Activated CD4-positive, alpha-beta memory T cell treated with anti-CD3 and anti-CD28 coated beads, Interleukin-2, amount 10 ng/mL, durations not matched to agents 7 days and 5 days (primary cell): ENCODE measurements at regions of chrX and their contacts with region 1.

Region 1: DNA sequence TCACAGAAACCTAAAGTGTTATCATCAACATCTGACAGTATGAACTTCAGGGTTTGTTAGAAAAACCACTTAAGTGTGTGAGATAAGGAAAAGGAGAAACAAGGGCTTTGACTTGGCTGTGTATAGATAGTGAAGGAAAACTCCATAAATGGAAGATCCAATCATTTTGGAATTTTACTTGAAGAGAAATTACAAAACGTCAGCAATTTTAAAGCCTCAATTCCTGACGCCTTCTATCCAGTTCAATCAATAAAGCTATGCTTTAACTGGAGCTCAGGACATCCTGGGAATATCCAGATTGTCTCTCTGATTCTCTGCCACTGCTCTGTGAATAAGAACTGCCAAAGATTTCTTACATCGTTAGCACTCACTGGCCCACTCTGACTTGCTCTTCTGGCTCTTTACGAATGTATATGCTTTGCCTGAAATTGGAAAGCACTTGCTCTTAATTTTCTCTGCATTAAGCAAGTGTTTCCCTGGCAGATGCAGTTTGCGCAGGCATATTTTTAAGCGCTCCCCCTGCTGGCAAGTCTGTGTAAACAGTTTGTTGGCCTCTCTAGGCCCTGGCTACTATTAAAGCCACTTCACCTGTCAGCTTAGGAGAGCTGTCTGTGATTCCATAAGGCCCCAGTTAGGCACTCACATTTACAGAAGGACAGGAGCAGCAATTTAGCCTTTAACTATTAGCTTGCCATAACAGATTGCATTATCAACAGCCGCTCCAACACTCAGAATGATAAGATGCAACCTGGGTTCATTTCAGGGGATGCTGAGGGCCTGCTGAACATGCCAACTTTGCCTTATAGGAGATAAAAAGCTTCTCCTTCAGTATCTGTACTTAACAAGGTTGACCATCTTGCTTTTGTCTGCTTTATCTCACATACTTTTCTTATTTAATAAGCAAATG is 251.4 kb upstream of the DDX53 start:
- DNase-seq: peak; percentile 20
- H3K4me3 Mint-ChIP-seq: no peak overlapping the region
- H3K27ac Mint-ChIP-seq: no peak overlapping the region
- H3K4me1 Mint-ChIP-seq: no peaks in the 10 kb centered on the region
- H3K27me3 Mint-ChIP-seq: no peaks in the 10 kb centered on the region

Region 2: DNA sequence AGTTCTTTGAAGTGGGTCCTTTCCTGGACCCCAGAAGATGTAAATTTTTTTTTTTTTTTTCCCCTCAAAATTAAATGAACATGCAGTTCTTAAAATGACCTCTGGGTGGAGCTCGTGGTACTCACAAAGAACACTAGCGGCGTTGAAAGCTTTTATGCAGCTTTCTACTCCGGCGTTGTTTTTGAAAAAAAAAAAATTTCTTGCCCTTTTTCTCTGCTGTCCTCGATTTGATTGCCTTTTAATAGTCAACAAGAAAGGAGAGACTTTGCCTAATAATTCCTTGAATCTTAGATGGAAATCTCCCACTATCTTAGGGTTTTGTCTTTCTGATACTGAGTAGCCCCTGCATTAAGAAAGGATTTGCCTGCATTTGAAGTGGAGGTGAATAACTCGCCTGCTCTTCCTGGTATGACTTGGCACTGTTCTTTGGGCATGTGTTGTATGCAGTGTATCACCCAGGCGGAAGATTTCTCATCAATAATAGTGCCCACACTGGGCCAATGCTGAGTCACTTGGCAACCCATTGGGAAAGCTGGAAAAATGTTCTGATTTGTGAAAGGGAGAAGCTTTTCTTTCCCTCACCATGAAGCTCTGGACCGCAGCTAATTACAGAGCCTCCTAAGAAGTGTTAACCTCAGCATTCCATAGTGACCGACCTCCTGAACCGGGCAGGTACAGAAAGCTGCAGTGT is 612.2 kb before region 1 on chrX:
- CTCF ChIA-PET with region 1: interaction called, 15 read pairs
- POLR2A ChIA-PET with region 1: no interaction called
- DNase-seq: no peak
- H3K4me3 Mint-ChIP-seq: no peak overlapping the region
- H3K27ac Mint-ChIP-seq: no peak overlapping the region
- H3K4me1 Mint-ChIP-seq: peaks cover 12% of the 10 kb centered on the region
- H3K27me3 Mint-ChIP-seq: no peaks in the 10 kb centered on the region

Region 3: DNA sequence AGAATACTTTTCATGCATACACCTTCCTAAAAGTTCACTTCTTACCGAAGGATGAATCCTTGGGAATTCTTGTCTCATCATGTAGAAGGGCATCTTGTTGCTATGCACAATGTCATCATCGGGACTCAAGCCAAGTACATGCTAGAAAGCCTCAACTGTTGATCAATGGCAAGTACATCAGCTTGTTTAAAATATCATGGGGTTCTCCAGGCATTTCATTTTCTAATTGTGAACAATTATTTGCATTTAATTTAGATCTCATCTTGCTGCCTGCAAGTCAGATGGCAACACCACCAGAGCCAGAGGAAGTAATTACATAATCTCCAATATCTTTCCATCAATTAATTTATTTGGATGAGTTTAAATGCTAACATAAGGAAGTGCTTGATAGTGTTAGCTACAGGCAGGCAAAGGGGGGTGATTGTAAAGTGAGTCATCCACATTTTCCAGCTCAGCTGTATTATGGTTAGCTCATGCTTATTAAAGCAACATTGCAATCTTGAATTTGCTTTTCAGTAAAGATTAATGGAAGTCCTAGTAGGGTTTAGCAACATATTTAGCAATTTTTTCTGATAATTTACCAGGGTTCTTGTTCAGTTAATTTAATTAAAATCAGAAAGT is 119.1 kb before region 1 on chrX:
- CTCF ChIA-PET with region 1: no interaction called
- POLR2A ChIA-PET with region 1: no interaction called
- DNase-seq: no peak
- H3K4me3 Mint-ChIP-seq: no peak overlapping the region
- H3K27ac Mint-ChIP-seq: no peak overlapping the region
- H3K4me1 Mint-ChIP-seq: no peaks in the 10 kb centered on the region
- H3K27me3 Mint-ChIP-seq: no peaks in the 10 kb centered on the region

Region 4: GRCh38 chrX:22652596-22652995 is 95.8 kb before region 1 on chrX:
- CTCF ChIA-PET with region 1: no interaction called
- POLR2A ChIA-PET with region 1: no interaction called
- DNase-seq: no peak
- H3K4me3 Mint-ChIP-seq: no peak overlapping the region
- H3K27ac Mint-ChIP-seq: no peak overlapping the region
- H3K4me1 Mint-ChIP-seq: no peaks in the 10 kb centered on the region
- H3K27me3 Mint-ChIP-seq: no peaks in the 10 kb centered on the region

Region 5: DNA sequence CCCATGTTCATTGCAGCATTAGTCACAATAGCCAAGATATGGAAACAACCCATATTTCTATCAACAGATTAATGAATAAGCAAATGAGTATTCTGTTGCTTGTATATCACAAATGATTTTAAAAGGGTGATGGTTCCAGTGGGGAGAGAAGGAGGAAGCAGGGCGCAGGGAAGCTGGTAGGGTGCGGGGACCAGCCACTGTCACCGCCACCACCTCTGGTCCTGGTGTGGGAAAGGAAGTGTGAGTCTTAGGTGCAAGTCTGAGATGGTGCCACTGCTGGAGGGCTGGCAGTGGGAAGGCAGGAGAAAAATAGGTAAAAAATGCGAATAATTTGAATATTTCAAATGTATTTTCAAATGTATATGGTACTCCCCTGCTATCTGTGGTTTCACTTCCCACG is 35.4 kb before region 1 on chrX:
- CTCF ChIA-PET with region 1: no interaction called
- POLR2A ChIA-PET with region 1: no interaction called
- DNase-seq: no peak
- H3K4me3 Mint-ChIP-seq: no peak overlapping the region
- H3K27ac Mint-ChIP-seq: no peak overlapping the region
- H3K4me1 Mint-ChIP-seq: no peaks in the 10 kb centered on the region
- H3K27me3 Mint-ChIP-seq: no peaks in the 10 kb centered on the region